Heart left ventricle (tissue), 16 donors: ENCODE measurements at regions of chr15 and their contacts with region 1.

Region 1: GRCh38 chr15:65028921-65029735 is at the start of gene MTFMT:
- DNase-seq: peak; percentile 92 to 97 (median 94)
- ATAC-seq: peak; percentile 90 to 97 (median 96)
- H3K4me3 ChIP-seq: peak within 1 kb of the TSS; percentile 61 to 99 (median 84)
- H3K27ac ChIP-seq: peak within 1 kb of the TSS in 11 of 12 donors; percentile 64 to 90 (median 77)
- H3K4me1 ChIP-seq: peaks cover 0 to 34% (median 10%) of the 10 kb centered on the region in 12 donors
- H3K27me3 ChIP-seq: peaks cover 0 to 5% (median 0%) of the 10 kb centered on the region in 9 donors
- CTCF ChIP-seq: peak in 2 of 12 donors; percentile 15 to 23
- POLR2A ChIP-seq: peak; percentile 60 to 93
- total RNA-seq, gene MTFMT: 14.3 to 41.0 (median 20.5) TPM

Region 2: GRCh38 chr15:64989416-64990167 is 39.5 kb before region 1 on chr15 and contains the start of gene SPG21:
- intact Hi-C with region 1: loop called in 1 of 10 experiments (anchors 1 kb)
- DNase-seq: peak; percentile 94 to 97 (median 95)
- ATAC-seq: peak; percentile 87 to 98 (median 96)
- H3K4me3 ChIP-seq: peak within 1 kb of the TSS; percentile 84 to 99 (median 92)
- H3K27ac ChIP-seq: peak within 1 kb of the TSS; percentile 77 to 96 (median 92)
- H3K4me1 ChIP-seq: peaks cover 0 to 50% (median 19%) of the 10 kb centered on the region in 12 donors
- H3K27me3 ChIP-seq: no peaks in the 10 kb centered on the region
- CTCF ChIP-seq: no peak
- POLR2A ChIP-seq: peak in 1 of 2 donors; percentile 75
- total RNA-seq, gene SPG21: 38.2 to 63.6 (median 48.7) TPM

Region 3: GRCh38 chr15:65049418-65049840 is 20.3 kb after region 1 on chr15:
- intact Hi-C with region 1: no loop called
- DNase-seq: peak; percentile 92 to 96 (median 94)
- ATAC-seq: peak; percentile 87 to 96 (median 92)
- H3K4me3 ChIP-seq: peak overlapping the region in 11 of 12 donors; percentile 1 to 52 (median 41)
- H3K27ac ChIP-seq: no peak overlapping the region
- H3K4me1 ChIP-seq: peaks cover 0 to 29% (median 11%) of the 10 kb centered on the region in 12 donors
- H3K27me3 ChIP-seq: no peaks in the 10 kb centered on the region
- CTCF ChIP-seq: no peak
- POLR2A ChIP-seq: no peak

Region 4: DNA sequence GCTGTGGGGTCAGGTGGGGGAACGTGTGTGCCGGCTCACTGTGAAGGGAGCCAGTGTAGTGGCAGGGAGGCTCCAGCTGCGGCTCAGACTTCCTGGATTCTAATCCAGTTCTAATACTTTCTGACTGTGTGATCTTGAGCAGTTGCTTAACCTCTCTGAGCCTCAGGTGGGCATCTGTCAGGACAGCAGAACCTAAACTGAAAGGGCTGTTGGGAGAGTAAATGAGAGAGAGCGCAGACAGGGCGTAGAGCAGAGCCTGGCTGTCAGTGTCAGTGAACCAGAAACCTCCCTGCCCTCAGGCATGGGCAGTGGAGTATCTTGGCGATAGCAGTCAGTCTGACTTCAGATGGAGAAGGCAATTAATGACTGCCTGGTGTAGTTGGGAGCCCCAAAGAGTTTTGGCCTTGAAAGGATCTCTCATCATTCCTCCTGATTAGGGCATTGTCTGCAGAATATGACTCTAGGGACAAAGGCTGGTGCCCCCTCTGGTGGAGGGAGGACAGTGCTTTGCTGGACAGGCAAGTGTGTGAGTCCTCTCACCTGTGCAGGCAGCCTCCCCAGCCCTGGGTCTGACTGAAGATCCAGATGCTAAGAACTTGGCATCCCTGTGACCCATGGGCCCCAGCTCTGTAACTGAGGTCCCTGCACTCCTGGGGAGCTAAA is 57.0 kb after region 1 on chr15:
- intact Hi-C with region 1: loop called in 3 of 10 experiments (anchors 2 to 10 kb)
- DNase-seq: peak in 1 of 5 donors; percentile 52
- ATAC-seq: no peak
- H3K4me3 ChIP-seq: no peak overlapping the region
- H3K27ac ChIP-seq: peak overlapping the region in 8 of 12 donors; percentile 64 to 97 (median 92)
- H3K4me1 ChIP-seq: peaks cover 12 to 85% (median 47%) of the 10 kb centered on the region in 12 donors
- H3K27me3 ChIP-seq: peaks cover 0 to 3% (median 0%) of the 10 kb centered on the region in 9 donors
- CTCF ChIP-seq: peak in 9 of 12 donors; percentile 8 to 51 (median 40)
- POLR2A ChIP-seq: no peak

Region 5: DNA sequence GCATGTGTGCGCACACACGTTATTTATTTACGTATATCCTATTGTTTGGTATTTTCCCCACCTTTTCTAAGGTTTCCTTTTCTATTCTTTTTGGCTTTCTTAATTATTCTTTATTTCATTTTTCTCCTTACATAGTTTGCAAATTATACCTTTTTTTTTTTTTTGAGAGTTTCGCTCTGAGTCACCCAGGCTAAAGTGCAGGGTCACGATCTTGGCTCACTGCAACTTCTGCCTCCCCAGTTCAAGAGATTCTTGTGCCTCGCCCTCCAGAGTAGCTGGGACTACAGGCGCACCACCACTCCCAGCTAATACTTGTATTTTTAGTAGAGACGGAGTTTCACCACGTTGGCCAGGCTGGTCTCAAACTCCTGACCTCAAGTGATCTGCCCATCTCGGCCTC is 202.2 kb after region 1 on chr15:
- intact Hi-C with region 1: no loop called
- DNase-seq: no peak
- ATAC-seq: no peak
- H3K4me3 ChIP-seq: no peak overlapping the region
- H3K27ac ChIP-seq: no peak overlapping the region
- H3K4me1 ChIP-seq: no peaks in the 10 kb centered on the region
- H3K27me3 ChIP-seq: no peaks in the 10 kb centered on the region
- CTCF ChIP-seq: no peak
- POLR2A ChIP-seq: no peak

Region 6: GRCh38 chr15:65275728-65276126 is 246.6 kb after region 1 on chr15:
- intact Hi-C with region 1: loop called in 1 of 10 experiments (anchors 10 kb)
- DNase-seq: no peak
- ATAC-seq: peak in 2 of 4 donors; percentile 35 to 43
- H3K4me3 ChIP-seq: no peak overlapping the region
- H3K27ac ChIP-seq: peak overlapping the region in 1 of 12 donors; percentile 28
- H3K4me1 ChIP-seq: peaks cover 0 to 18% (median 5%) of the 10 kb centered on the region in 12 donors
- H3K27me3 ChIP-seq: no peaks in the 10 kb centered on the region
- CTCF ChIP-seq: no peak
- POLR2A ChIP-seq: no peak

Region 7: GRCh38 chr15:65298731-65299130 is 269.6 kb after region 1 on chr15:
- intact Hi-C with region 1: loop called in 2 of 10 experiments (anchors 5 to 10 kb)
- DNase-seq: no peak
- ATAC-seq: no peak
- H3K4me3 ChIP-seq: no peak overlapping the region
- H3K27ac ChIP-seq: no peak overlapping the region
- H3K4me1 ChIP-seq: peaks cover 0 to 24% (median 8%) of the 10 kb centered on the region in 12 donors
- H3K27me3 ChIP-seq: no peaks in the 10 kb centered on the region
- CTCF ChIP-seq: no peak
- POLR2A ChIP-seq: no peak